SK-N-SH (cell line): ENCODE measurements at regions of chr5 and their contacts with region 1.

Region 1: GRCh38 chr5:14727428-14727865 is 62.9 kb downstream of the OTULIN start:
- DNase-seq: peak; percentile 81
- H3K4me3 ChIP-seq: no peak overlapping the region; a peak in 1 of 4 replicates
- H3K27ac ChIP-seq: no peak overlapping the region
- H3K4me1 ChIP-seq: 0 out of 4 replicates have a peak, but pooled peaks cover 0 to 7% of the 10 kb centered on the region in 2 experiments
- H3K27me3 ChIP-seq: no peaks in the 10 kb centered on the region
- CTCF ChIP-seq: peak; percentile 96
- EP300 ChIP-seq: no peak
- RAD21 ChIP-seq: peak; percentile 98

Region 2: GRCh38 chr5:14706615-14707021 is 20.8 kb before region 1 on chr5:
- CTCF ChIA-PET with region 1: interaction called, 14 read pairs
- POLR2A ChIA-PET with region 1: no interaction called
- DNase-seq: peak; percentile 45
- H3K4me3 ChIP-seq: no peak overlapping the region
- H3K27ac ChIP-seq: peak overlapping the region; percentile 58 to 78
- H3K4me1 ChIP-seq: peaks cover 9 to 22% of the 10 kb centered on the region in 2 experiments; a peak in 3 of 4 replicates
- H3K27me3 ChIP-seq: no peaks in the 10 kb centered on the region
- CTCF ChIP-seq: no peak
- EP300 ChIP-seq: no peak
- RAD21 ChIP-seq: no peak

Region 3: DNA sequence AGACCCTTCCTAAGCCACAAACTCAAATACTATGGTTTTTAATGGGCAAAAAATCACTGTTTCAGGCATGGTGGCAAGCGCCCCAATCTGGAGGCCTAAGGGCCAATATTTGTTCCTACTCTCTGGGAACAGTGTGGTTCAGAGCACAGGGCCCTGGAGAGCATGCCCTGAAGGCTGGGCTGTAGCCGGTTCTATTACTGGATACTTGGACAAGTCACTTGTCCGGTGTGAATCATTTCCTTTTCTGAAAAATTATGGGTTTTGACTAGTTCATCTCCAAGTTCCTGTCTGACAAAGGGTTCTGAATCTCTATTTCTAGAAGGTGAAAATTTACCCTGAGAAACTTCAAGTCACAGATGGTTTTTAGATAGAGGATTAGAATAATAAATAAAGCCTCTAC is 12.1 kb after region 1 on chr5:
- CTCF ChIA-PET with region 1: interaction called, 26 read pairs
- POLR2A ChIA-PET with region 1: no interaction called
- DNase-seq: no peak
- H3K4me3 ChIP-seq: no peak overlapping the region
- H3K27ac ChIP-seq: peak overlapping the region in 1 of 2 experiments; percentile 73; a peak in 2 of 4 replicates
- H3K4me1 ChIP-seq: peaks cover 0 to 25% of the 10 kb centered on the region in 2 experiments; a peak in 2 of 4 replicates
- H3K27me3 ChIP-seq: no peaks in the 10 kb centered on the region
- CTCF ChIP-seq: no peak
- EP300 ChIP-seq: no peak
- RAD21 ChIP-seq: no peak

Region 4: DNA sequence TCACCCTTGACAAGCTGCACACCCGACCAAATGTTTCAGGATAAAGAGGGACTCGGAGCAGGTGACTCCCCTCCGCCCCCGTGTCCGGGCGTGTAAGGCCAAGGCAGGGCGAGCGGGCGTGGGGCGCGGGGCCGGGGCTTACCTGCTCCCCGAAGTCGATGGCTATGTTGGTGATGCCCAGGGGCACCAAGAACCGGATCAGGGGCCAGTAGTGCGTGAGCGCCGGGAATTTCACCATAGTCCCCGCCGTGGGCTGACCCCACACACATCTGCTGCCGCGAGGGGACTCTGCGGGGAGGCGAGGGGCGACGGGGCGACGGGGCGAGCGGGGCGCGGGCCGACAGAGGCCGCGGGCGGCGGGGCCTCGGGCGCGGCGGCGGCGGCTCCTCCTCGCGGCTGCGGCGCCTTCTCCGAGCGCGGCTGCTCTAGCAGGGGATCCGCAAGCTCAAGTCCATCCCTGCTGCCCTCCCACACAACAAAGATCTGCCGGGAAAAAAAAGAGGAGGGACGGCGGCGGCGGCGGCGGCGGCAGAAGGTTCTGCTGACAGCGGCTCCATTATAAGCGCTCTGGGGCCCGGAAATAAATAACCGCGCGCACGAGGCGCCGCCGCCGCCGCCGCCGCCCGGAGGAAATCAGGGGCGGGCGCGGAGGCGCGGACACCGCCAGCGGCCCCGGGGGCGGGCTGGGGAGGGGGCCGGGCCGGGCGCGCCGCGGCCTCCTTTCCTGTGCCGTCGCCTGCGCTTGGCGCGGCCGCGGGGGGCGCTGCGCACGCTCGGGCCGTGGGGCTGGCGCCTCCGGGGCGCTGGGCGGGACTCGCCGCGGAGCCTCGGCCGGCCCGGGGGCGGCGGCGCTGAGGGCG is 144.0 kb after region 1 on chr5 and contains the start of gene ANKH:
- CTCF ChIA-PET with region 1: interaction called, 21 read pairs
- POLR2A ChIA-PET with region 1: no interaction called
- DNase-seq: peak; percentile 94
- H3K4me3 ChIP-seq: peak within 1 kb of the TSS; percentile 69 to 93
- H3K27ac ChIP-seq: peak within 1 kb of the TSS; percentile 56 to 67
- H3K4me1 ChIP-seq: peaks cover 0 to 13% of the 10 kb centered on the region in 2 experiments; a peak in 2 of 4 replicates
- H3K27me3 ChIP-seq: no peaks in the 10 kb centered on the region
- CTCF ChIP-seq: no peak
- EP300 ChIP-seq: peak in 1 of 2 experiments; percentile 46; a peak in 1 of 4 replicates
- RAD21 ChIP-seq: no peak
- polyA plus RNA-seq, gene ANKH: 14.8 and 22.0 TPM in 2 replicates

Region 5: DNA sequence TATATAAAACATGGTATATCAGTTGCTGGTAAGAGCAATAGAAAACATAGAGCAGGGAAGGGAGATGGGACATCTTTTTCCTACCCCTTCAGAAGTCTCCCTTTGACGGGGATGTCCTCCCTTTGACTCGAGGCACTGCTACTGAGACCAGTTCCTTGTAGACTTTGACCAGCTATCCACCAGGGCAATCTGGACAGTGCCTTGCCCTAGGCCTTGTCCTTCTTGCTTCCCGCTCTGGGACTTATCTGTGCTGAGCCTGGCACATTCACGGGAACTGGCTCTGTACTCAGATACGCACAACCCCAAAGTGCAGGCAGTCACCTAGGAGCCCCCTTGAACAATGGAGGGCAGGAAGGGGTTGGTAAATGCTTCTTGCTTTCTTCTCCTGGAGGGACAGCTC is 260.8 kb after region 1 on chr5:
- CTCF ChIA-PET with region 1: interaction called, 11 read pairs
- POLR2A ChIA-PET with region 1: no interaction called
- DNase-seq: no peak
- H3K4me3 ChIP-seq: no peak overlapping the region
- H3K27ac ChIP-seq: no peak overlapping the region
- H3K4me1 ChIP-seq: no peaks in the 10 kb centered on the region
- H3K27me3 ChIP-seq: no peaks in the 10 kb centered on the region
- CTCF ChIP-seq: no peak
- EP300 ChIP-seq: no peak
- RAD21 ChIP-seq: no peak

Region 6: DNA sequence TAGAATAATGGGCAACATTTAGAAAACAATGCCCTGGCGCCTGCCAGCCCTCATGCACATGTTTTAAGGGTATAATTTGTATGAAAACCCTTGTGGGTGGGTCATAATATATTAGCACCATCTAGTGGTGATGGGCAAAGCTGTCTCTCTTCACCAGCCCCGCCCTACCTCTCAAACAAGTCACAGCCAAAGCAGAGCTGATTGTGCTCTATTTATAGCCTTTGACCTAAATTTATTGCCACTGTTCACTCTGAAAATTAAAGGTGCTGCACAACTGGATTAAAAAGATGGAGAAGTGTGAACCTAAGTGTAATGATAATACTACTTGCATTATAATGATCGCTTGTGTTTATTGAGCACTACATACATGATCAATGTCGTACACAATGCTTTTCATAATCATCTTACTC is 276.1 kb after region 1 on chr5:
- CTCF ChIA-PET with region 1: interaction called, 203 read pairs
- POLR2A ChIA-PET with region 1: no interaction called
- DNase-seq: peak; percentile 85
- H3K4me3 ChIP-seq: peak overlapping the region in 1 of 2 experiments; percentile 38; a peak in 1 of 4 replicates
- H3K27ac ChIP-seq: no peak overlapping the region
- H3K4me1 ChIP-seq: peaks cover 0 to 7% of the 10 kb centered on the region in 2 experiments; a peak in 3 of 4 replicates
- H3K27me3 ChIP-seq: no peaks in the 10 kb centered on the region
- CTCF ChIP-seq: peak; percentile 89
- EP300 ChIP-seq: no peak
- RAD21 ChIP-seq: peak; percentile 96

Region 7: DNA sequence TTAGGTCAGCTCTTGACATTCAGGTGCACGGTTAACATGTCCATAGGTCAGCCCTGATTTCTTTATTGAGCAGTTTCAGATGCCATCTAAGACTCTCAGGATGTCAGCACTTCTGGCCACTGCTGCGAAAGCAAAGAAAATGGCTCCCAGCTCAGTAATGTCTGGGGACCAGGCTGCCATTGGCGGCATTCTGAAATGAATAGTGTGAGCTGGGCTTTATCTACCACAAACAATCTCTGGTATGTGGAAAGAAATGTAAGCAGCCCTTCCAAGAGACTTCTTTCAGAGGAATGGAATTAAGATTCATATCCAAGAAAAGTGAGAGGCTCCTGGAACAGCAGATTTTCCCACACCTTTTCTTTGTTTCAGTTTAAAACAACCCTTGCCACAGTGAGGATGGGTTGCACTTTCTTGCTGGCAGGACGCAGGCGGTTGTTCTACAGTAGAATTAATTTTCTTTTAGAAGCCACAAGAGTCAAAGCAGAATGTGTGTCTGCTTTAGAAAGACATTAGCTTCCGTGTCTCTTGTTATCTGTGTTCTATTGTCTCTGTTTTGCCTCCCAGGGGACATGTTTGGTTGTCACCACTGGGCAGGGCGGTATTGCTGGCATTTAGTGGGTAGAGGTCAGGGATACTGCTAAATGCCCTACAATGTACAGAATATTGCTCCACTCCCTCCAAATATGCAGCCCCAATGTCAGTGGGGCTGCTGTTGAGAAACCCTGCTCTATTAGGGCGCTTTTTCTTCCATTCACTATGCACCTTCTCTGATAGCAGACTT is 294.0 kb after region 1 on chr5:
- CTCF ChIA-PET with region 1: interaction called, 11 read pairs
- POLR2A ChIA-PET with region 1: no interaction called
- DNase-seq: no peak
- H3K4me3 ChIP-seq: no peak overlapping the region
- H3K27ac ChIP-seq: peak overlapping the region; percentile 56 to 96; a peak in 3 of 4 replicates
- H3K4me1 ChIP-seq: peaks cover 5 to 9% of the 10 kb centered on the region in 2 experiments; a peak in 3 of 4 replicates
- H3K27me3 ChIP-seq: no peaks in the 10 kb centered on the region
- CTCF ChIP-seq: no peak
- EP300 ChIP-seq: peak in 1 of 2 experiments; percentile 67; a peak in 1 of 4 replicates
- RAD21 ChIP-seq: no peak

Region 8: GRCh38 chr5:15092801-15093200 is 365.4 kb after region 1 on chr5:
- CTCF ChIA-PET with region 1: no interaction called
- POLR2A ChIA-PET with region 1: no interaction called
- DNase-seq: no peak
- H3K4me3 ChIP-seq: no peak overlapping the region
- H3K27ac ChIP-seq: no peak overlapping the region
- H3K4me1 ChIP-seq: no peaks in the 10 kb centered on the region
- H3K27me3 ChIP-seq: no peaks in the 10 kb centered on the region
- CTCF ChIP-seq: no peak
- EP300 ChIP-seq: no peak
- RAD21 ChIP-seq: no peak